ENCODE measurements at regions of chr5 and their contacts with region 1.

Region 1: DNA sequence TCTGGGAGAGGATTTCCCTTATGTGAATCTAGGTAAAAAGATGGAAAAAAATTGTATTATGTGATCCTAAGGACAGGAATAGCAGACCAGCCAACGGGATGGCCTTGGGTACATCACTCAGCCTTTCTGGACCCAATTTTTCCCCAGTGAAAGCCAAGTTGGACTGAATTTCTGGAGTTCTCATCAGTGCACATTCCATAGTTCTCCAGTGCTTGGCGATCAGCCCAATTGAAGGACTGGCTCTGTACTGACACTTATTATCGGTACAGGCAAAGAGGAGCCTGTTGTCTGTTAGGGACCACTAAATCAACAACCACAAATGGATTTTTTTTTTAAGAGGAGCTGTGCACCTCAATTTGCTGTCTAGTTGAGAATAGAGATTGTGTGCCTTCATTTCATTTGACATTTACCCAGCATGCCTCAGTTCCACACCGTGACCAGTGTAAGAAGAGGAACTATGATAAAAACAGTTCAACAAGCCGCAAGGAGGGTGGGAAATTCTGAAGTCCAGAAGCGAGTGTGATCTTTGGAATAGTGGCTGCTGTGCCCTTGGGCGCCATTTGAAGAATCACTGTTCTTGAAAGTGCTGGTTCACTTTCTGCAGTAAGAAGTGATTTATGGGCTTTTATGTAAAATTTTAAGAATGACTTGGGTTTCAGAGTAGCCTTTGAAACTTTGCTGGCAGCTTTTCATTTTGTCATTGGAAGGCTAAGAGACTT is 8.0 kb downstream of the ARL10 start:
- DNase-seq: no peak
- H3K4me3 ChIP-seq: no peak overlapping the region
- H3K27ac ChIP-seq: no peak overlapping the region
- H3K4me1 ChIP-seq: no peaks in the 10 kb centered on the region
- H3K27me3 ChIP-seq: no peaks in the 10 kb centered on the region
- CTCF ChIP-seq: no peak
- EP300 ChIP-seq: no peak
- POLR2A ChIP-seq: no peak
- RAD21 ChIP-seq: no peak

Region 2: GRCh38 chr5:176201811-176202210 is 171.4 kb before region 1 on chr5:
- CTCF ChIA-PET with region 1: no interaction called
- POLR2A ChIA-PET with region 1: no interaction called
- DNase-seq: no peak
- H3K4me3 ChIP-seq: no peak overlapping the region
- H3K27ac ChIP-seq: no peak overlapping the region
- H3K4me1 ChIP-seq: 0 out of 7 replicates have a peak, but pooled peaks cover 0 to 2% (median 0%) of the 10 kb centered on the region in 4 experiments
- H3K27me3 ChIP-seq: peaks cover 3 to 21% (median 8%) of the 10 kb centered on the region in 4 experiments
- CTCF ChIP-seq: no peak
- EP300 ChIP-seq: no peak
- POLR2A ChIP-seq: no peak
- RAD21 ChIP-seq: no peak

Region 3: DNA sequence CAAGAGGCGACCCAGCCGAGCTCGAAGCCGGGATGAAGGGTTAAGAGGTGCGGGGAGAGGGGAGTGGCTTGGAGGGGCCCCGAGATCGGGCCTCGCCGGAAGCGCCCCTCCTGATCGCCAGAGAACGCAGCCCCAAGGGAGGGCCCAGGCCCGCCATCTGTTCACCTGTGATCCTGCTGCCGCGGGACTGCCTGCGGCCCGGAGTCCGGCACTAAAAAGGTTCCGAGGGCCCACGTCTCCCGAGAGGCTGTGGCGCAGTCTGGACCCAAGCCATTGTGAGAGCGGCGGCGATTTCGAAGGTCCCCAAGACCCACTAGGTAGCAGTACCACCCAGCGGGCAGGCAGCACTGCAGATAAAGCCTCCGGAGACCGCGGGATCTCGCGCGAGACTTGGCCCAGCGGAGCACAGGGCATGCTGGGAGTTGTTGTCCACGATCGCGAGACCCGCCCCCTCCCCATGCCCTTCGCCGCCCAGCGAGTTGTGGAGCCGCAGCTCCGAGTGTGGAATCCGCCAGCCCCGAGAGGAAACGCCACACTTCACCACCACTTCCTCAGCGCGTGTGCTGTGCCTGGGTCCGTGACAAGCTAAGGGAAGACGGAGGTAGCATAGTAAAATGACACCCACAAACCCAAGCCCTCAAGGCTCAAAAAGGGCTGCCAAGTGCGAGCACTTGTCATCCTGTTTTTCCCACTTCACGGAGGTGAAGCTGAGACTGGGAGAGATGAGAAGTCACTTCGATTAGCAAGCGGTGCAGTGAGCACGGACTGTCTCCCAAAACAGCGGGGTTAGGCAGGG is 11.6 kb before region 1 on chr5 and contains the start of gene KIAA1191:
- CTCF ChIA-PET with region 1: no interaction called
- POLR2A ChIA-PET with region 1: interaction called, 15 read pairs
- DNase-seq: peak in 1 of 2 experiments; percentile 90
- H3K4me3 ChIP-seq: peak within 1 kb of the TSS; percentile 79 to 95 (median 92)
- H3K27ac ChIP-seq: peak within 1 kb of the TSS; percentile 88
- H3K4me1 ChIP-seq: peaks cover 0 to 5% (median 3%) of the 10 kb centered on the region in 4 experiments; a peak in 4 of 7 replicates
- H3K27me3 ChIP-seq: peaks cover 7 to 37% (median 30%) of the 10 kb centered on the region in 4 experiments
- CTCF ChIP-seq: peak in 1 of 3 experiments; percentile 5; a peak in 2 of 4 replicates
- EP300 ChIP-seq: no peak
- POLR2A ChIP-seq: peak; percentile 93 to 98
- RAD21 ChIP-seq: 0 out of 4 replicates have a peak, but pooled peaks of 1 of the 2 experiments have one; percentile 1
- total RNA-seq, gene KIAA1191: 88.0 and 96.4 TPM in 2 replicates